ENCODE measurements at regions of chr17 and their contacts with region 1.

Region 1: DNA sequence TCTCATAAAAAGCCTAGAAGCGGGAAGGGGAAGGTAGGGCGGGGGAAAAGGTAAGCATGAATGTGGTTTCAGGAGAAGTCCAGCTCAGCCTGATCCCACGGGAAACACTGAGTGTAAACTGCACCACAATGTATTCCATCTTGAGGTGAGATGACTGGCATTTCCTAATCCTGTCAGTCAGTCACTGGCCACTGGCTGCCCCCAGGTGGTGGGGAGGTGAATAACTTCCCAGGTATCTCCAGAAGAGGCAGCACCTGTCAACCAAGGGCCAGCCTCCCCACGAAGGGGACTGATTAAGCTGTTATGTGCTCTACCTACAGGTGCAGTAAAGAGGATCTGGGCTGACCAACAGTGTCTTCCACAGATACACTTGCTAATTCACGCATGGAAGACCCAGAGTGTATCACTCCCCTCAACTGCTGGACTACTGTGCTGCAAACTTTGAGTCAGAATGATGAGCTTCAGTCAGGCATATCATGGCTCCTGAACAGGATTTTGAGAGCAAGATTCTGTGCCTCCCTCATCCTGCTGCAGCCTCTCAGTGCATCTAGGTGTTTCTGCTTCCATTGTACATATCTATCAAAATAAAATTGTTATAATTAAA is 108.5 kb upstream of the CCL2 start:
- DNase-seq: peak in 8 of 9 experiments; percentile 6 to 60 (median 42)
- ATAC-seq: no peak
- H3K4me3 ChIP-seq: no peak overlapping the region
- H3K4me3 Mint-ChIP-seq: no peak overlapping the region
- H3K27ac ChIP-seq: no peak overlapping the region
- H3K27ac Mint-ChIP-seq: no peak overlapping the region
- H3K4me1 ChIP-seq: no peaks in the 10 kb centered on the region
- H3K4me1 Mint-ChIP-seq: no peaks in the 10 kb centered on the region
- H3K27me3 ChIP-seq: no peaks in the 10 kb centered on the region
- H3K27me3 Mint-ChIP-seq: peaks cover 29% of the 10 kb centered on the region
- CTCF ChIP-seq: peak; percentile 32

Region 2: GRCh38 chr17:33766721-33767120 is 379.8 kb before region 1 on chr17:
- CTCF ChIA-PET with region 1: no interaction called
- POLR2A ChIA-PET with region 1: no interaction called
- intact Hi-C with region 1: no loop called
- DNase-seq: no peak
- ATAC-seq: no peak
- H3K4me3 ChIP-seq: no peak overlapping the region
- H3K4me3 Mint-ChIP-seq: no peak overlapping the region
- H3K27ac ChIP-seq: no peak overlapping the region
- H3K27ac Mint-ChIP-seq: no peak overlapping the region
- H3K4me1 ChIP-seq: no peaks in the 10 kb centered on the region
- H3K4me1 Mint-ChIP-seq: no peaks in the 10 kb centered on the region
- H3K27me3 ChIP-seq: no peaks in the 10 kb centered on the region
- H3K27me3 Mint-ChIP-seq: peaks cover 12% of the 10 kb centered on the region
- CTCF ChIP-seq: no peak

Region 3: GRCh38 chr17:33779225-33779591 is 367.3 kb before region 1 on chr17:
- CTCF ChIA-PET with region 1: interaction called, 18 read pairs
- POLR2A ChIA-PET with region 1: no interaction called
- intact Hi-C with region 1: loop called in 1 of 2 experiments (anchors 2 kb)
- DNase-seq: peak in 8 of 9 experiments; percentile 1 to 52 (median 21)
- ATAC-seq: peak; percentile 38
- H3K4me3 ChIP-seq: no peak overlapping the region
- H3K4me3 Mint-ChIP-seq: no peak overlapping the region
- H3K27ac ChIP-seq: no peak overlapping the region
- H3K27ac Mint-ChIP-seq: no peak overlapping the region
- H3K4me1 ChIP-seq: no peaks in the 10 kb centered on the region
- H3K4me1 Mint-ChIP-seq: no peaks in the 10 kb centered on the region
- H3K27me3 ChIP-seq: no peaks in the 10 kb centered on the region
- H3K27me3 Mint-ChIP-seq: peaks cover 19% of the 10 kb centered on the region
- CTCF ChIP-seq: peak; percentile 94

Region 4: DNA sequence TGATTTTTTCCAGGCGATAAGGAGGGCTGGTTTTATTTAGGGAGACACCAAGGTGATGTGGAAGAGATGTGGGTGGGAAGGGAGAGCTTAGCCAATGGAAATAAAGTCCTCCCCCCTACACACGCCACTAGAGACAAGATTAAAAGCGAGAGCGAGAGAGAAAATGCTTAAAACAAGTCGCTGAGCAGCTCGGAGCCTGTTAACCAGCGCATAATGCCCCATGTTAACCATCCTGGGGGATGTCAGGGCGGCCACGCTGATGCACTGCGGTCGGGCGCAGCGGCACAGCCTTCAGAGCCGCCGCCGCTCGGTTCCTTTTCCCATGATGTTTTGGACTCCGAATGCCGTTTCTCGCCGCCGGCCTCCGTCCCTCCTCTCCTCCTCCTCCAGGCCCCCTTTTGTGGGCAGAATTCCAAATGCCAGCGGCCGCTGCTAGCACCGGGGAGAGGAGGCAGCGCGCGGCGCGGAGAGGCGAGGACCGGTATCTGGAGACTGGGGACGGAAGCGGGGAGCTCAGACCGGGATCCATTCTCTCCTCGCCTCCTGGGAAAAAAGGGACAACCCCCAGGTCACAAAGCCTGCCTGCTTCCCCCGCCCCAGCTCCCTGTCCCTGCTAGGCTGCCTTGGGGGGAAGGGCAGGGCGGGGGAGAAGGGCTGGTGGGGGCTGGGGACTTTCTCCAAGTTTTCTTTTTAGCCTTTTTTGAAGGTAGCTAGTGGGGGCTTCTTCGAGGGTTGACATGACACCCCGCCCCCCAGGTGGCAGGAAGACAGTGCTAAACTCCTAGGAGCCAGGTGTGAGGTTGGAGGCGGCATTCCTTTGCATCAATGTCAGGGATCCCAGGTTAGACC is 10.4 kb after region 1 on chr17:
- CTCF ChIA-PET with region 1: interaction called, 13 read pairs
- POLR2A ChIA-PET with region 1: no interaction called
- intact Hi-C with region 1: no loop called
- DNase-seq: no peak
- ATAC-seq: no peak
- H3K4me3 ChIP-seq: no peak overlapping the region
- H3K4me3 Mint-ChIP-seq: no peak overlapping the region
- H3K27ac ChIP-seq: no peak overlapping the region
- H3K27ac Mint-ChIP-seq: no peak overlapping the region
- H3K4me1 ChIP-seq: no peaks in the 10 kb centered on the region
- H3K4me1 Mint-ChIP-seq: peaks cover 8% of the 10 kb centered on the region
- H3K27me3 ChIP-seq: peaks cover 6 to 7% of the 10 kb centered on the region in 2 experiments
- H3K27me3 Mint-ChIP-seq: peaks cover 42% of the 10 kb centered on the region
- CTCF ChIP-seq: no peak

Region 5: DNA sequence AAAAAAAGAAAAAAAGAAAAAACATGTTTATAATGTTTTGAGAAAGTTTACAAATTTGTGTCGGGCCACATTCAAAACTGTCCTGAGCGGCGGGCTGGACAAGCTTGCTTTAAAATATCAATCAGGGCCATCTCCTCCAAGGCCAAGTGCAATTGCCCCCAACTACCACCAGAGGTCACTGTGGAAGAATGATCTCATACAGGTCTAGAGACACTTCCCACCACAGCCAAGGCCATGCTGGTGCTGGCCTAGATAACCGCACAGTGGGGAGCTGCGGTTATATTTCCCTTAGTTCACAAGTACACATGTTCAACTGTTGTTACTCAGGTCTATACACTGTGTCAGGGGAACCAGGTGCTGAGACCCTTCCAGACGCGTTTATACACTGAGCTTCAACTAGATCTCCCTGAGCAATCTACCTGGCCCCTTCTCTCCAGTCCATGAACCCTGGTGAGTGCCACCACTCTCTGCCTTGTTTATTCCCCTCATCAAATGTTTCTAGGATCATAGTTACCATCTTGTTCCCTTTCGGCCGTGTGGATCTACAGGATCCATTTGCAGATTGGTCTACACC is 24.8 kb after region 1 on chr17:
- CTCF ChIA-PET with region 1: interaction called, 12 read pairs
- POLR2A ChIA-PET with region 1: no interaction called
- intact Hi-C with region 1: no loop called
- DNase-seq: peak; percentile 16 to 65 (median 45)
- ATAC-seq: peak; percentile 62
- H3K4me3 ChIP-seq: no peak overlapping the region
- H3K4me3 Mint-ChIP-seq: no peak overlapping the region
- H3K27ac ChIP-seq: no peak overlapping the region
- H3K27ac Mint-ChIP-seq: no peak overlapping the region
- H3K4me1 ChIP-seq: no peaks in the 10 kb centered on the region
- H3K4me1 Mint-ChIP-seq: no peaks in the 10 kb centered on the region
- H3K27me3 ChIP-seq: no peaks in the 10 kb centered on the region
- H3K27me3 Mint-ChIP-seq: peaks cover 7% of the 10 kb centered on the region
- CTCF ChIP-seq: peak; percentile 95

Region 6: DNA sequence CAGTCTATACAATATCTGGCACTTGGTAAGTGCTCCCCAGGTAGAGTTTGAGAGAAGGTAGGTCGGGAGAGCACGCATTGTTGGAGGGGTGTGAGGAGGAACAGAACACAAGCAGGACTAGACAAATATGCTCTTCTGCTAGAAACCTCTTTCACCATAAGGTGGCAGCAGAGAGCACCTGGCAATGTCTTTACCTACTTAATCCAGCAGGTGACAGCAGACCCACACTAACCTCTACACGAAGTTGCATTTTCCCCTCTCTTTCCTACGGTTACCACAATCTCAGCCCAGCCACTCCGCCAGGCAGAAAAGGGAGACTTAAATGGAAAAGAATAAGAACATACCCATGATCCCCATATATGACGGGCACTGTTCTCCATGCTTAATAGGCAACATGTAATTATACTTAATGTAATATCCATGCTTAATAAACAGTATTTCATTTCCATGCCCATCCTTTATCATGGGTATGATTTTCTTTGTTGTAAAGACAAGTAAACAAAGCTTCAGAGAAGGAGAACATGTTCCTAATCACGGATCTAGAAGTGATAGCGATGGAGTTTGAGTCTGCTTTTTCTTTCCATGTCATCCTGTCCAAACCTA is 53.5 kb after region 1 on chr17:
- CTCF ChIA-PET with region 1: no interaction called
- POLR2A ChIA-PET with region 1: no interaction called
- intact Hi-C with region 1: no loop called
- DNase-seq: peak; percentile 47 to 82 (median 65)
- ATAC-seq: peak; percentile 92
- H3K4me3 ChIP-seq: no peak overlapping the region
- H3K4me3 Mint-ChIP-seq: no peak overlapping the region
- H3K27ac ChIP-seq: no peak overlapping the region
- H3K27ac Mint-ChIP-seq: no peak overlapping the region
- H3K4me1 ChIP-seq: no peaks in the 10 kb centered on the region
- H3K4me1 Mint-ChIP-seq: peaks cover 4% of the 10 kb centered on the region
- H3K27me3 ChIP-seq: peaks cover 0 to 2% of the 10 kb centered on the region in 2 experiments
- H3K27me3 Mint-ChIP-seq: peaks cover 25% of the 10 kb centered on the region
- CTCF ChIP-seq: peak; percentile 100